GM12878 (cell line): ENCODE measurements at regions of chr4 and their contacts with region 1.

Region 1: GRCh38 chr4:142379277-142380057 is 466.6 kb downstream of the INPP4B start:
- DNase-seq: no peak
- ATAC-seq: peak; percentile 7
- H3K4me3 ChIP-seq: no peak overlapping the region
- H3K27ac ChIP-seq: no peak overlapping the region
- H3K4me1 ChIP-seq: no peaks in the 10 kb centered on the region
- H3K27me3 ChIP-seq: no peaks in the 10 kb centered on the region
- CTCF ChIP-seq: no peak
- EP300 ChIP-seq: no peak
- POLR2A ChIP-seq: no peak
- RAD21 ChIP-seq: no peak

Region 2: DNA sequence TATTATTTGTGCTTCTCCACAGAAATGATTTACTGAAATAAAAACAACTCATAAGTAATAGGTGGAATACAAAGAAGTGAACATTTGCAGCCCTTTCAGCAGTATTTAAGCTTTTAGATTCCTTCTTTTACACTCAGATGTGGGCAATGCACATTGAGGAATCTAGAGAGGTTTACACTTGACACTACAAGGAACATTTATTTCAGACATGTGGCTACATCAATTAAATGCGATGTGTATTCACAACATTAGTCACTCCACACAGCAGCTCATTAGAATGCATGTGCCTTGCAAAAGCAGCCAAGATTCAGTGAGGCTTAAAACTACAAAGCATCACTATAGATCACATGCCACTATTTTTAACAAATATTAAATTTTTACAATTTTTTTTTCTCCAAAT is 14.1 kb before region 1 on chr4:
- CTCF ChIA-PET with region 1: interaction called, 10 read pairs
- POLR2A ChIA-PET with region 1: interaction called, 7 read pairs
- RAD21 ChIA-PET with region 1: interaction called, 10 read pairs
- SMC1A ChIA-PET with region 1: interaction called, 49 read pairs
- in situ Hi-C with region 1: no loop called
- intact Hi-C with region 1: no loop called
- DNase-seq: no peak
- ATAC-seq: peak; percentile 12; the same call in 2 of the 3 replicates
- H3K4me3 ChIP-seq: no peak overlapping the region
- H3K27ac ChIP-seq: no peak overlapping the region
- H3K4me1 ChIP-seq: no peaks in the 10 kb centered on the region
- H3K27me3 ChIP-seq: no peaks in the 10 kb centered on the region
- CTCF ChIP-seq: no peak
- EP300 ChIP-seq: no peak
- POLR2A ChIP-seq: no peak
- RAD21 ChIP-seq: no peak

Region 3: DNA sequence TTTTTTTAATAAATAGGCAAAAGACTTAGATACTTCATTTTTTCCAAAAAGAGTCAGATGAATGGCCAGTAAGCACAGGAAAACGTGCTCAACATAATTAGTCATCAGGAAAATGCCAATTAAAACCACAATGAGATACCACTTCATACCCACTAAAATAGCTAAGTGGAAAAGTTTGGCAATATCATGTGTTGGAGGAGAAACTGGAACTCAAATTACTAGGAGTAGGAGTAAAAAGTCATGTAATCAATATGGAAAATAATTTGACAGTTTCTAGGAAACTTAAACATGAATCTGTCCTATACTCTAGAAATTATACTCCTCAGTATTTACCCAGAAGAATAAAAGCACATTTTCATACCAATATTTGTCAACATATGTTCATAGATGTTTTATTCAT is 16.8 kb after region 1 on chr4:
- CTCF ChIA-PET with region 1: interaction called, 10 read pairs
- POLR2A ChIA-PET with region 1: interaction called, 6 read pairs
- RAD21 ChIA-PET with region 1: interaction called, 60 read pairs
- SMC1A ChIA-PET with region 1: interaction called, 55 read pairs
- in situ Hi-C with region 1: no loop called
- intact Hi-C with region 1: no loop called
- DNase-seq: no peak
- ATAC-seq: no peak
- H3K4me3 ChIP-seq: no peak overlapping the region
- H3K27ac ChIP-seq: no peak overlapping the region
- H3K4me1 ChIP-seq: no peaks in the 10 kb centered on the region
- H3K27me3 ChIP-seq: no peaks in the 10 kb centered on the region
- CTCF ChIP-seq: no peak
- EP300 ChIP-seq: no peak
- POLR2A ChIP-seq: no peak
- RAD21 ChIP-seq: no peak